Transverse colon (tissue), 4 donors: ENCODE measurements at regions of chr20 and their contacts with region 1.

Region 1: GRCh38 chr20:766931-767330 is 1.4 kb downstream of the SLC52A3 start:
- DNase-seq: no peak
- H3K4me3 ChIP-seq: no peak overlapping the region
- H3K27ac ChIP-seq: peak overlapping the region in 1 of 4 donors; percentile 90
- H3K4me1 ChIP-seq: peaks cover 0 to 27% (median 14%) of the 10 kb centered on the region in 4 donors
- H3K27me3 ChIP-seq: no peaks in the 10 kb centered on the region
- CTCF ChIP-seq: no peak
- EP300 ChIP-seq: no peak
- POLR2A ChIP-seq: no peak

Region 2: GRCh38 chr20:787825-788224 is 20.9 kb after region 1 on chr20:
- in situ Hi-C with region 1: no loop called
- intact Hi-C with region 1: loop called (anchors 1 kb)
- DNase-seq: no peak
- H3K4me3 ChIP-seq: no peak overlapping the region
- H3K27ac ChIP-seq: no peak overlapping the region
- H3K4me1 ChIP-seq: no peaks in the 10 kb centered on the region
- H3K27me3 ChIP-seq: no peaks in the 10 kb centered on the region
- CTCF ChIP-seq: no peak
- EP300 ChIP-seq: no peak
- POLR2A ChIP-seq: no peak

Region 3: GRCh38 chr20:2349818-2350508 is 1583.0 kb after region 1 on chr20:
- in situ Hi-C with region 1: no loop called
- intact Hi-C with region 1: no loop called
- DNase-seq: no peak
- H3K4me3 ChIP-seq: no peak overlapping the region
- H3K27ac ChIP-seq: no peak overlapping the region
- H3K4me1 ChIP-seq: no peaks in the 10 kb centered on the region
- H3K27me3 ChIP-seq: peaks cover 21% of the 10 kb centered on the region
- CTCF ChIP-seq: no peak
- EP300 ChIP-seq: no peak
- POLR2A ChIP-seq: no peak